ENCODE measurements at regions of chr22 and their contacts with region 1.

Region 1: DNA sequence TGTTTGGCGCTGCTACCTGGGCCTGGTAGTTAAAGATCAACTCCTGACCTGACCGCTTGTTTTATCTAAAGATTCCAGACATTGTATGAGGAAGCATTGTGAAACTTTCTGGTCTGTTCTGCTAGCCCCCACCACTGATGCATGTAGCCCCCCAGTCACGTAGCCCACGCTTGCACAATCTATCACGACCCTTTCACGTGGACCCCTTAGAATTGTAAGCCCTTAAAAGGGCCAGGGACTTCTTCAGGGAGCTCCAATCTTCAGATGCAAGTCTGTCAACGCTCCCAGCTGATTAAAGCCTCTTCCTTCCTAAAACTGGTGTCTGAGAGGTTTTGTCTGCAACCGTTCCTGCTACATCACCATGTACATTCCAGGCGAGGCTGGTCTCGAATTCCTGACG is 15.0 kb downstream of the APOBEC3F start:
- DNase-seq: no peak

Region 2: DNA sequence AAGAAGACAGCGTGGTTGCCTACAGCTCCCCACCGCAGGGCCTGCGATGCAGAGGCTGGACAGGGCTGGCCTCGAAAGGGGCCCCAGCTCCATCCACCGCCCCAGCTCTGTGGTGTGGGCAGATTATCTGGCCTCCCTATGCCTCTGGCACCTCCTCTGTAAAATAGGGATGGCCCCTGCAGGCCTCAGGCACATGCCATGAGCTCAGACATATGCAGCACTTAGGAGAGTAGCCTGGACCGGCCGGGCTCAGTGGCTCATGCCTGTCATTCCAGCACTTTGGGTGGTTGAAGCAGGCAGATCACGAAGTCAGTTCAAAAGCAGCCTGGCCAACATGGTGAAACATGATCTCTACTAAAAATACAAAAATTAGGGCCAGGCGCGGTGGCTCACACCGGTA is 27.4 kb before region 1 on chr22:
- intact Hi-C with region 1: loop called in 1 of 2 experiments (anchors 2 kb)
- DNase-seq: no peak